Activated naive CD4-positive, alpha-beta T cell treated with anti-CD3 and anti-CD28 coated beads for 36 hours (primary cell): ENCODE measurements at regions of chr12 and their contacts with region 1.

Region 1: GRCh38 chr12:54251667-54252284 is 28.1 kb downstream of the CBX5 start:
- DNase-seq: no peak
- H3K4me3 Mint-ChIP-seq: no peak overlapping the region
- H3K27ac Mint-ChIP-seq: no peak overlapping the region
- H3K4me1 Mint-ChIP-seq: peaks cover 8% of the 10 kb centered on the region
- H3K27me3 Mint-ChIP-seq: no peaks in the 10 kb centered on the region

Region 2: DNA sequence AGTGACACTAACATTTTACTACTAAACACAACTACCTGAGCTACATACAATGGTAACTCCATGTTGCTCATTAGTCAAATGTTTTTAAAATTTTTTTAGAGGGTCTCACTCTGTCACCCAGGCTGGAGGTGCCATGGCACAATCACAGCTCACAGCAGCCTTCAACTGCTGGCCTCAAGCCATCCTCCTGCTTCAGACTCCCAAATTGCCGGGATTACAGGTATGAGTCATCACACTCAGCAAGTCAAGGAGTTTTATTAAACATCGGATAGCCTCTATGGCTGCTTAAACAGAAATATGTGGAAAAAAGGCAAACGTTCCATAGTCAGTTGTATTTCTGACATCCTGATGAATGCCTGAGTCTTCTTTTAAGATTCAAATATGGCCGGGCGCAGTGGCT is 733.4 kb before region 1 on chr12:
- CTCF ChIA-PET with region 1: no interaction called
- intact Hi-C with region 1: no loop called
- DNase-seq: no peak
- H3K4me3 Mint-ChIP-seq: no peak overlapping the region
- H3K27ac Mint-ChIP-seq: no peak overlapping the region
- H3K4me1 Mint-ChIP-seq: no peaks in the 10 kb centered on the region
- H3K27me3 Mint-ChIP-seq: no peaks in the 10 kb centered on the region

Region 3: GRCh38 chr12:54240971-54241588 is 10.7 kb before region 1 on chr12:
- CTCF ChIA-PET with region 1: interaction called, 30 read pairs
- intact Hi-C with region 1: no loop called
- DNase-seq: peak; percentile 16
- H3K4me3 Mint-ChIP-seq: no peak overlapping the region
- H3K27ac Mint-ChIP-seq: peak overlapping the region; percentile 80
- H3K4me1 Mint-ChIP-seq: peaks cover 16% of the 10 kb centered on the region
- H3K27me3 Mint-ChIP-seq: no peaks in the 10 kb centered on the region

Region 4: GRCh38 chr12:54262403-54262925 is 10.7 kb after region 1 on chr12:
- CTCF ChIA-PET with region 1: interaction called, 11 read pairs
- intact Hi-C with region 1: no loop called
- DNase-seq: no peak
- H3K4me3 Mint-ChIP-seq: no peak overlapping the region
- H3K27ac Mint-ChIP-seq: no peak overlapping the region
- H3K4me1 Mint-ChIP-seq: peaks cover 50% of the 10 kb centered on the region
- H3K27me3 Mint-ChIP-seq: no peaks in the 10 kb centered on the region

Region 5: DNA sequence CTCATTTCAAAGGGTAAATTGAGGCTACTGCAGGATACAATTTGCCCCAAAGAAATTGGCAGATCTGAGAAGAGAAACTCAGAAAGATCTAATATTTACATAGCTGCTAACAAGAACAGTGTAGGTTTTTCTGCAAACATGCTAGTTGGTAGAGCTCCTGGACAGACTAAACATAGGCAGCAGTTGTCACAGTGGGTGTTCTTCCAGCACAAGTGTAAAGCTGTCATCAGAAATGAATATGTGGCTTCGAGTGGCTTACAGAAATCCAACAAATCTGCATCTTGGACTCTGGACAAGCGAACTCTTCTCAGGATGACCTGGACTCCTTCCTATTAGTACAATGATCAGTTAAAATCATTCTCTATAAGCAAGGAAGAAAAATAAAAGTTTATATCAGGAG is 22.2 kb after region 1 on chr12:
- CTCF ChIA-PET with region 1: interaction called, 14 read pairs
- intact Hi-C with region 1: no loop called
- DNase-seq: no peak
- H3K4me3 Mint-ChIP-seq: no peak overlapping the region
- H3K27ac Mint-ChIP-seq: no peak overlapping the region
- H3K4me1 Mint-ChIP-seq: peaks cover 76% of the 10 kb centered on the region
- H3K27me3 Mint-ChIP-seq: no peaks in the 10 kb centered on the region